Activated B cell treated with CpG ODN at 0.5 μM for 24 hours (primary cell): ENCODE measurements at regions of chr1 and their contacts with region 1.

Region 1: DNA sequence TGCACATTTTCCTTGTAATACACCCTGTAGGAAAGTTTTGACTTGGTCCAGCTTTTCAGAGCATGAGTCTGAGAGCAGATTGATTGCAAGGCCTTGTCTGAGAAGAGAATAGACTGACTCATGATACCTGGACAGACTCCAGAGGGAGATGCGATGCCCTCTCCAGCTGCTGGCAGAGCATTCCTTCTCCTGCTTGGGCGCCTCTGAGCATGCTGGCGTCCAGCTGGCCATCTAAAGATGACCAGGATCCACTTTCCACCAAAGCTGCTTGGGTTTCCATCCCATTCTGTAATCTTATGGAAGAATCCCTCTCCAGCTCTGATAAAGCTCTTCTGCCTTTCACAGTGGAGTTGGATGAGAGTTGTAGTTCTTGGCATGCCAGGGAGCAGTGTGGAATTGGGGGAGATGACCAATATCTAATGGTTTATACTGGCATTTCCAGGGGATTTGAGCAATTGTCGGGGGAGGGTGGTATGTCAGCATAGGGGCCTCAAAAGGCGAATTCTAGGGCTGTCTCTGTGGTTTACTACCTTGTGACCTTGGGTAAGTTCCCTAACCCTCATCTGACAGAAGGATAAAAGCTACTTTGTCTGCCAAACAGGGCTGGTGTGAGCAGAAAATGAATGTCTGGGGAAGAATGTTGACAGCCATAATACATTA is 19.5 kb downstream of the SZRD1 start:
- DNase-seq: no peak
- ATAC-seq: peak; percentile 23
- H3K4me3 Mint-ChIP-seq: peak overlapping the region; percentile 73
- H3K27ac Mint-ChIP-seq: peak overlapping the region; percentile 92
- H3K4me1 Mint-ChIP-seq: peaks cover 79% of the 10 kb centered on the region
- H3K27me3 Mint-ChIP-seq: no peaks in the 10 kb centered on the region
- CTCF ChIP-seq: no peak

Region 2: DNA sequence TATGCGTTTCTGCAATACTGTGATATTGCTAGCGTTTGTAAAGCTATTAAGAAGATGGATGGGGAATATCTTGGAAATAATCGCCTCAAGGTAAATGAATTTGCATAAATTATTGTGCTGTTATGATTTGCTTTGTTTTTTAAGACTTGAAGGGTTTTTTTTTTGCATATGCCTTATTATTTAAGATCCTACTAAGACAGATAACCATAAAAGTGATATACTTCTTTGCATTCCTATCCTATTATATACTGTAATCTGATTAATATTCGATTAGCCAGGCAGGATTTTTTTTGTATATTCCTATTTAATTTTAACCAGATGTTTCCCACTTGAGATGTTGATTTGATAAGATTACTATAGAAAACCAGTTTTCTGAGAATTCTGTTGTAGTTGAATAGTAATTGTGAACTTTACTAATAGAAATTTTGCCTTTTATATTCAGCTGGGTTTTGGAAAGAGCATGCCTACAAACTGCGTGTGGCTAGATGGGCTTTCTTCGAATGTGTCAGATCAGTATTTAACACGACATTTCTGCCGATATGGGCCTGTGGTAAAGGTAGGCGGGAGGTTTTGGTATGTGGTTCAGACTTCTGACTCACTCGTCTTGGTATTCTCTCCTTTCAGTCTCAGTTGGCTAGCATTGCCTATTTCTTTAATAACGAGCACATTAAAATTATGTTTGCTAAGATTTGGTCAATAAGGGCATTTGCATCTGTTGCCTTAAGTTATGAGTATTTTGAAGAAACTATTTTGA is 467.4 kb before region 1 on chr1:
- CTCF ChIA-PET with region 1: no interaction called
- POLR2A ChIA-PET with region 1: no interaction called
- intact Hi-C with region 1: no loop called
- DNase-seq: no peak
- ATAC-seq: peak; percentile 70
- H3K4me3 Mint-ChIP-seq: no peak overlapping the region
- H3K27ac Mint-ChIP-seq: peak overlapping the region; percentile 32
- H3K4me1 Mint-ChIP-seq: peaks cover 31% of the 10 kb centered on the region
- H3K27me3 Mint-ChIP-seq: no peaks in the 10 kb centered on the region
- CTCF ChIP-seq: no peak

Region 3: GRCh38 chr1:16372535-16373285 is 13.9 kb before region 1 on chr1:
- CTCF ChIA-PET with region 1: interaction called, 6 read pairs
- POLR2A ChIA-PET with region 1: interaction called, 49 read pairs
- intact Hi-C with region 1: loop called (anchors 1 kb)
- DNase-seq: no peak
- ATAC-seq: no peak
- H3K4me3 Mint-ChIP-seq: no peak overlapping the region
- H3K27ac Mint-ChIP-seq: no peak overlapping the region
- H3K4me1 Mint-ChIP-seq: peaks cover 79% of the 10 kb centered on the region
- H3K27me3 Mint-ChIP-seq: no peaks in the 10 kb centered on the region
- CTCF ChIP-seq: no peak

Region 4: GRCh38 chr1:16409536-16410152 is 23.1 kb after region 1 on chr1:
- CTCF ChIA-PET with region 1: no interaction called
- POLR2A ChIA-PET with region 1: no interaction called
- intact Hi-C with region 1: no loop called
- DNase-seq: no peak
- ATAC-seq: no peak
- H3K4me3 Mint-ChIP-seq: no peak overlapping the region
- H3K27ac Mint-ChIP-seq: no peak overlapping the region
- H3K4me1 Mint-ChIP-seq: peaks cover 5% of the 10 kb centered on the region
- H3K27me3 Mint-ChIP-seq: no peaks in the 10 kb centered on the region
- CTCF ChIP-seq: no peak

Region 5: GRCh38 chr1:16420424-16421118 is 34.0 kb after region 1 on chr1:
- CTCF ChIA-PET with region 1: no interaction called
- POLR2A ChIA-PET with region 1: interaction called, 3 read pairs
- intact Hi-C with region 1: loop called (anchors 5 kb)
- DNase-seq: no peak
- ATAC-seq: peak; percentile 97
- H3K4me3 Mint-ChIP-seq: peak overlapping the region; percentile 48
- H3K27ac Mint-ChIP-seq: peak overlapping the region; percentile 84
- H3K4me1 Mint-ChIP-seq: peaks cover 31% of the 10 kb centered on the region
- H3K27me3 Mint-ChIP-seq: no peaks in the 10 kb centered on the region
- CTCF ChIP-seq: no peak

Region 6: DNA sequence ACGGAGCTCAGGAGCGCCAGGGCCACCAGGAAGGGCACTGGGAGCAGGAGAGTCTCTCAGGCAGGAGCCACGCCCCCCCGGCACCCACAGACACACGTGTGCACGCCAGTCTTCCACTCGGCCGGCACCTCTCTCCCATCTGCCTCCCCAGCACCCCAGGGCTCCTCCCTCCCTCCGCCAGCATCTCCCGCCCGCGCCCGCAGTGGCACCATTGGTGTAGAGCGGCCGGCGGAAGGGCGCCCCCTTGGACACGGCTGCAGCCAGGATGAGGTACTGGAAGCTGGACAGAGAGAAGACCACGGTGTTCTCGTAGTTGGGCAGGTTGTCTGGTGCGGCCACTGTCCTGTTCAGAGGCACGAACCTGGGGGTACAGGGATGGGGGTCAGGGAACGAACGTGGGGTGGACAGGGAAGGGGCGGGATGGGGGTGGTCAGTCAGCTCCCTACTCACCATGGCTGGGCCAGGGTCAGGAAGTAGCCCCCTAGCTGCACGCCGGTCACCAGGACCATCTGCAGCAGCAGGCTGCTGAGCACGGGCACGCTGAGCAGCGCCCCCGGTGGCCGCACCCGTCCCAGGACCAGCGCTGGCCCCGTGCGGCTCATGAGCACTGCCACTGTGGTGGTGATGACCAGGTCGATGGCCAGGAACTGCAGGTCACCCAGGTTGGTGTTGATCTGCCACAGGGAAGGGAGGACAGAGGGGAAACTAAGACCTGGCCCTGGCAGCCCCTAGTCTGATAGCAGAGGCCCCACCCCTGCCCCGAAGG is 600.2 kb after region 1 on chr1:
- CTCF ChIA-PET with region 1: no interaction called
- POLR2A ChIA-PET with region 1: no interaction called
- intact Hi-C with region 1: no loop called
- DNase-seq: no peak
- ATAC-seq: no peak
- H3K4me3 Mint-ChIP-seq: no peak overlapping the region
- H3K27ac Mint-ChIP-seq: no peak overlapping the region
- H3K4me1 Mint-ChIP-seq: no peaks in the 10 kb centered on the region
- H3K27me3 Mint-ChIP-seq: peaks cover 9% of the 10 kb centered on the region
- CTCF ChIP-seq: no peak